ENCODE measurements at regions of chr12 and their contacts with region 1.

Region 1: DNA sequence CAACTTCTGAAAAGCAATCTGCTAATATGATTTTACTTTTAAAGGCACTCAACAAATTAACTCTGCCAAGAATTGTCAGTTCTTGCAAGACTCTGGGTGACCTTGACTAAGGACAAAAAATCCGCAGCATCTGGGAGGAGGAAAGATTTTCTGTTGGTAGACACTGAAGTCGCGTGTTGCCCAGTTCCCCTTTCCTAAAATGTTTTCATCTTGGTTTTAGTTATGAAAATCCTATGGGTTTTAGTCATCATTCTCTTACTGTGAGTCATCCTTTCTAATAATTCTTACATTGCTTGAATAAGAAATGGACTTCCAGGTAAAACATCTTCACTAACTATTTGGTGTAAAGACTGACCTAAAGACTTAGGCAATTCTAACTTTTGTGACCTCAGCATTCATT is 9.1 kb downstream of the GSG1 start:
- DNase-seq: peak in 1 of 7 donors; percentile 20
- H3K4me3 ChIP-seq: no peak overlapping the region
- H3K27ac ChIP-seq: no peak overlapping the region
- H3K4me1 ChIP-seq: peaks cover 9 to 26% of the 10 kb centered on the region in 2 donors
- H3K27me3 ChIP-seq: peaks cover 5% of the 10 kb centered on the region
- CTCF ChIP-seq: no peak
- POLR2A ChIP-seq: no peak

Region 2: DNA sequence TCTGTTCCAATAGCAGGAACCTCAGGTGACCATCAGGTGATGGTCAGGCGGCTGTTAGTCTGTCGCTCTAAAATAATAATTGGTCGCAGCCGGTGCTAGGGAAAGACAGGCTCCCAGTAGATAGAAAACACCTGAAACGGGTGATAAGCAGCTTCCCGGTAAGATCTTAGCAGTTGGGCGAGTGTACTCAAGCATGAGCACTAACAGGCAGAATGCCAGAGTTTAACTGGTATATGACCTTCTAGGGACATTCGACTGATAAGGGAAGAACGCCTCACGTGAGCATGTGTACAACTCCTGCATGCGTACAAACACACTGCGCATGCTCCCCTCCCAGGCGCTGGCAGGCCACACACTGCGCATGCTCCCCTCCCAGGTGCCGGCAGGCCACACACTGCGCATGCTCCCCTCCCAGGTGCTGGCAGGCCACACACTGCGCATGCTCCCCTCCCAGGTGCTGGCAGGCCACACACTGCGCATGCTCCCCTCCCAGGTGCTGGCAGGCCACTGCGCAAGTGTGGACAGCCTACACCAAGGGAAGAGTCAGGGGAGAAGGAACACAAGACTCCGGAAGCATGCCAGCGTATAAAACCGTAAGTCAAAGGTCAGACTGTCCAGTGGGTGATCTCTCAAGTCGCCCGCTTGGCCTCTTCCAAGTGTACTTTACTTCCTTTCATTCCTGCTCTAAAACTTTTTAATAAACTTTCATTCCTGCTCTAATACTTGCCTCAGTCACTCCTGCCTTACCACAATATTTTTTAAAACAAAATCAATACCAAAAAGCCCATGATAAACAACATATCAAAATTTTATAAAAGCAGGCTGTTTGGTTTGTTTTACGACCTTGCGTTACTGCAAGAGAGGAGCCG is 166.9 kb before region 1 on chr12:
- intact Hi-C with region 1: loop called in 1 of 2 experiments (anchors 10 kb)
- DNase-seq: peak; percentile 87 to 97 (median 92)
- H3K4me3 ChIP-seq: peak overlapping the region in 3 of 4 donors; percentile 22 to 45 (median 32)
- H3K27ac ChIP-seq: peak overlapping the region in 3 of 5 donors; percentile 60 to 74 (median 66)
- H3K4me1 ChIP-seq: peaks cover 2 to 4% of the 10 kb centered on the region in 2 donors
- H3K27me3 ChIP-seq: no peaks in the 10 kb centered on the region
- CTCF ChIP-seq: no peak
- POLR2A ChIP-seq: peak; percentile 23 to 81